Left ventricle myocardium inferior (tissue), 1 donor: ENCODE measurements at regions of chr20 and their contacts with region 1.

Region 1: GRCh38 chr20:45890985-45891983 is at the starts of genes CTSA and NEURL2:
- DNase-seq: peak; percentile 96
- H3K4me3 ChIP-seq: peak within 1 kb of the TSS; percentile 83
- H3K27ac ChIP-seq: peak within 1 kb of the TSS; percentile 94
- H3K4me1 ChIP-seq: peaks cover 50% of the 10 kb centered on the region
- H3K27me3 ChIP-seq: no peaks in the 10 kb centered on the region
- CTCF ChIP-seq: no peak
- total RNA-seq, gene CTSA: 116 TPM
- total RNA-seq, gene NEURL2: 7.6 TPM

Region 2: GRCh38 chr20:45758068-45758467 is 133.2 kb before region 1 on chr20:
- intact Hi-C with region 1: no loop called
- DNase-seq: no peak
- H3K4me3 ChIP-seq: no peak overlapping the region
- H3K27ac ChIP-seq: no peak overlapping the region
- H3K4me1 ChIP-seq: no peaks in the 10 kb centered on the region
- H3K27me3 ChIP-seq: no peaks in the 10 kb centered on the region
- CTCF ChIP-seq: no peak

Region 3: GRCh38 chr20:45934586-45935415 is 43.5 kb after region 1 on chr20 and contains the start of gene PCIF1:
- intact Hi-C with region 1: loop called (anchors 5 kb)
- DNase-seq: peak; percentile 98
- H3K4me3 ChIP-seq: peak within 1 kb of the TSS; percentile 100
- H3K27ac ChIP-seq: peak within 1 kb of the TSS; percentile 100
- H3K4me1 ChIP-seq: peaks cover 41% of the 10 kb centered on the region
- H3K27me3 ChIP-seq: no peaks in the 10 kb centered on the region
- CTCF ChIP-seq: no peak
- total RNA-seq, gene PCIF1: 21.9 TPM